Left ventricle myocardium inferior (tissue), 1 donor: ENCODE measurements at regions of chr12 and their contacts with region 1.

Region 1: GRCh38 chr12:48350249-48351021 is at the start of gene ZNF641:
- DNase-seq: peak; percentile 88
- H3K4me3 ChIP-seq: peak within 1 kb of the TSS; percentile 89
- H3K27ac ChIP-seq: peak within 1 kb of the TSS; percentile 98
- H3K4me1 ChIP-seq: peaks cover 47% of the 10 kb centered on the region
- H3K27me3 ChIP-seq: no peaks in the 10 kb centered on the region
- CTCF ChIP-seq: no peak
- total RNA-seq, gene ZNF641: 16.0 TPM

Region 2: GRCh38 chr12:48197971-48198671 is 152.3 kb before region 1 on chr12:
- intact Hi-C with region 1: loop called (anchors 10 kb)
- DNase-seq: peak; percentile 99
- H3K4me3 ChIP-seq: peak overlapping the region; percentile 84
- H3K27ac ChIP-seq: peak overlapping the region; percentile 100
- H3K4me1 ChIP-seq: peaks cover 42% of the 10 kb centered on the region
- H3K27me3 ChIP-seq: no peaks in the 10 kb centered on the region
- CTCF ChIP-seq: no peak